GM12878 (cell line): ENCODE measurements at regions of chr10 and their contacts with region 1.

Region 1: DNA sequence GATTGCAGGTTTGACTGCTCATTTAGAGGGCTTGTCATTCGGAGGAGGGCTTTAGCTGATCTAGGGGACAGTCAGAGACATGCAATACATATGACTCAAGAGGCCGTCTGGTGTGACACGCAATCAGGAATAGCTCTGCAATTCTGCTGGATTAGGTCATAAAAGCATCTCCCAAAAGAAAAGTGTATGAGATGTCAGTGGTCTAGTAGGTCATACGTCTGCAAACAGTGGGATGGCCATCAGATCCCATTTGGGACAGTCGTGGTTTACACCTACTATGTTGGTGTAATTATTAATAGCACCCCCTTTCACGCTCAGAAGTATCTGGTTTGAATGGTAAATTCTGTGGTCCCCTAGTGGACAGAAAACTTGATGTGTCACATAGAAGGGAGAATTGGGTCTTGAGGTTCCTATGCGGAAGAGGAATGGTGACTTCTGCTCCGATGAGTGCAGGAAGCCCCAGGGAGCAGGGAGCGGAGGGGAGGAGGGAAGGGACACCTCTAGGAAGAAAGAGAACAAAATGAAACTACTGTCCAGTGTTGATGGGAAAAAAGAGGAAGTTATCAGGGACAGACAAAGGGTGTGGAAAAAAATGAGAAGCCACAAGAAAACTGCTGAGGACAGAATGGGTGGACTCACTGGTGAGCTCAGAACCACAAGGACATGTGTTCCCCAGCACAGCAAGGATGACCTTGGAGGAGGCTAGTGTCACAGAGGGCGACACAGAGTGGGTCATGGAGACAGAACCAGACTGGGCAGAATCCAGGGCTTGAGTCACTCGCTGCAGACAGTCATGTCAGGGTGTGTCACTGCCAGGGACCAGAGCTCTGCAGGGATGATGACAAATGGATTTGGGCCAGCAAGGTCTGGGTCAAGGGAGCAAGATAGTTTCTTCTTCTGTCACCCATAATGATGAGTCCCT is 59.9 kb downstream of the MAP3K8 start:
- DNase-seq: no peak
- ATAC-seq: peak; percentile 63
- H3K4me3 ChIP-seq: peak overlapping the region; percentile 40; the same call in 1 of the 2 replicates
- H3K27ac ChIP-seq: peak overlapping the region; percentile 87
- H3K4me1 ChIP-seq: peaks cover 88% of the 10 kb centered on the region
- H3K27me3 ChIP-seq: no peaks in the 10 kb centered on the region
- CTCF ChIP-seq: peak; percentile 20 to 45 (median 37); a peak in 5 of 6 replicates
- EP300 ChIP-seq: peak; percentile 35 to 80; a peak in 1 of 4 replicates
- POLR2A ChIP-seq: no peak
- RAD21 ChIP-seq: peak; percentile 37; the same call in 1 of the 2 replicates

Region 2: GRCh38 chr10:30422981-30423654 is 70.8 kb before region 1 on chr10:
- CTCF ChIA-PET with region 1: interaction called, 8 read pairs
- POLR2A ChIA-PET with region 1: interaction called, 8 read pairs
- RAD21 ChIA-PET with region 1: interaction called, 32 read pairs
- SMC1A ChIA-PET with region 1: interaction called, 25 read pairs
- in situ Hi-C with region 1: no loop called
- intact Hi-C with region 1: loop called (anchors 5 kb)
- DNase-seq: no peak
- ATAC-seq: no peak
- H3K4me3 ChIP-seq: no peak overlapping the region; the same call in 1 of the 2 replicates
- H3K27ac ChIP-seq: no peak overlapping the region; the same call in none of the 2 replicates
- H3K4me1 ChIP-seq: peaks cover 61% of the 10 kb centered on the region
- H3K27me3 ChIP-seq: no peaks in the 10 kb centered on the region
- CTCF ChIP-seq: no peak
- EP300 ChIP-seq: no peak
- POLR2A ChIP-seq: no peak
- RAD21 ChIP-seq: no peak

Region 3: DNA sequence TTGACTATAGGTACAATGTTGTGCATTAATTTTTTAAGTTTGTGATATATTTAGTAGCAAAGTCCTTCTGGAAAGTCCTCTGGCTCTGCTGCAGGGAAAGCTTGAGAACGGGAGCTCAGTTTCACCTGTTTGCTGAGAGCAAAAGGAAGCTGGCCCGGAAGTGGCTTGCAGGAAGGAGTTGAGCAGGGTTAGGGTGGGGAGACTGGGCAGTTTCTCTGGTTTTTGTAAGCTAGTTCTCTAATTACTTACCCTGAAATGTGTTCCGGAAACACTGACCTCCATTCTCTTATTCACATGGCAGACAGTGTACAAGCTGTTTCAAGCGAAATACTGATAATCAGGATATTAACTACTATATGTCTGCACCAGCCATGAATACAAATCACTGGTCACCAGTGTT is 37.6 kb before region 1 on chr10:
- CTCF ChIA-PET with region 1: interaction called, 6 read pairs
- POLR2A ChIA-PET with region 1: interaction called, 7 read pairs
- RAD21 ChIA-PET with region 1: interaction called, 8 read pairs
- SMC1A ChIA-PET with region 1: interaction called, 7 read pairs
- in situ Hi-C with region 1: no loop called
- intact Hi-C with region 1: loop called (anchors 5 kb)
- DNase-seq: peak; percentile 65
- ATAC-seq: peak; percentile 88
- H3K4me3 ChIP-seq: no peak overlapping the region
- H3K27ac ChIP-seq: peak overlapping the region; percentile 64
- H3K4me1 ChIP-seq: peaks cover 15% of the 10 kb centered on the region
- H3K27me3 ChIP-seq: no peaks in the 10 kb centered on the region
- CTCF ChIP-seq: no peak
- EP300 ChIP-seq: no peak
- POLR2A ChIP-seq: no peak
- RAD21 ChIP-seq: no peak; the same call in 1 of the 2 replicates

Region 4: DNA sequence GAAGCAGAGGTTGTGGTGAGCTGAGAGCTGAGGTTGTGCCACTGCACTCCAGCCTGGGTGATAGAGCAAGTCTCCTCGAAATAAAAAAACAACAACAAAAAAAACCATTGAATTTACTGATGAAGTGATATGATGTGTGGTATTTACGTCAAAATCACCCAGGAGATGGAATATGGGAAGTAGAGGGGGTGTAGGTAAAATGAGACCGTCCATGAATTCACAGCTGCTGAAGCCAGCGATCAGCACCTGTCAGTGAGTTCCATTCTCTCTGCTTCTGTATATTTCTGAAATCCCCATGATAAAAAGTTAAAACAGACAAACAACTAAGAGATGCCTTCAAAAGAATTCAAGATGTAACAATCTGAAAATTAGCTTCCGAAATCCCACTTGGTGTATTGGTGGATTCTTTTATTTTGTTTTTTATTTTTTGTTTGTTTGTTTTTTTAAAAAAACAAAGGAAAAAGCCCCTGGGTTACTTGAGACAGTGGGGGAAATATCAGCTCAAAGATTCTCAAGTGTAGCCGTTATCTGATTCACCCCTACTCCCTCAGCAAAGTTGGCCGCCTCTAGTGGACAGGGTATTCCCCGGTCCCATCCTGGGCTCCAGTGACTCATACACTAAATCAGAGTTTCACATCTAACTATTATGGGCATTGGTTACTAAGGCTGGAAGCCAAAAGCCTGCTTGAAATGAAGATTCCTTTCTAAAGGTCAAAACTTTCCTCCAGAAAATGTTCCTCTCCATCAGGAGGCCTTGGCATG is 16.5 kb after region 1 on chr10:
- CTCF ChIA-PET with region 1: interaction called, 20 read pairs
- POLR2A ChIA-PET with region 1: interaction called, 7 read pairs
- RAD21 ChIA-PET with region 1: interaction called, 27 read pairs
- SMC1A ChIA-PET with region 1: interaction called, 39 read pairs
- in situ Hi-C with region 1: no loop called
- intact Hi-C with region 1: no loop called
- DNase-seq: no peak
- ATAC-seq: peak; percentile 95
- H3K4me3 ChIP-seq: 0 out of 2 replicates have a peak overlapping the region, but pooled peaks have one; percentile 23
- H3K27ac ChIP-seq: peak overlapping the region; percentile 85
- H3K4me1 ChIP-seq: peaks cover 29% of the 10 kb centered on the region
- H3K27me3 ChIP-seq: no peaks in the 10 kb centered on the region
- CTCF ChIP-seq: peak in 2 of 3 experiments; percentile 7 to 23; a peak in 1 of 6 replicates
- EP300 ChIP-seq: no peak
- POLR2A ChIP-seq: no peak
- RAD21 ChIP-seq: no peak